ENCODE measurements at regions of chr12 and their contacts with region 1.

Region 1: DNA sequence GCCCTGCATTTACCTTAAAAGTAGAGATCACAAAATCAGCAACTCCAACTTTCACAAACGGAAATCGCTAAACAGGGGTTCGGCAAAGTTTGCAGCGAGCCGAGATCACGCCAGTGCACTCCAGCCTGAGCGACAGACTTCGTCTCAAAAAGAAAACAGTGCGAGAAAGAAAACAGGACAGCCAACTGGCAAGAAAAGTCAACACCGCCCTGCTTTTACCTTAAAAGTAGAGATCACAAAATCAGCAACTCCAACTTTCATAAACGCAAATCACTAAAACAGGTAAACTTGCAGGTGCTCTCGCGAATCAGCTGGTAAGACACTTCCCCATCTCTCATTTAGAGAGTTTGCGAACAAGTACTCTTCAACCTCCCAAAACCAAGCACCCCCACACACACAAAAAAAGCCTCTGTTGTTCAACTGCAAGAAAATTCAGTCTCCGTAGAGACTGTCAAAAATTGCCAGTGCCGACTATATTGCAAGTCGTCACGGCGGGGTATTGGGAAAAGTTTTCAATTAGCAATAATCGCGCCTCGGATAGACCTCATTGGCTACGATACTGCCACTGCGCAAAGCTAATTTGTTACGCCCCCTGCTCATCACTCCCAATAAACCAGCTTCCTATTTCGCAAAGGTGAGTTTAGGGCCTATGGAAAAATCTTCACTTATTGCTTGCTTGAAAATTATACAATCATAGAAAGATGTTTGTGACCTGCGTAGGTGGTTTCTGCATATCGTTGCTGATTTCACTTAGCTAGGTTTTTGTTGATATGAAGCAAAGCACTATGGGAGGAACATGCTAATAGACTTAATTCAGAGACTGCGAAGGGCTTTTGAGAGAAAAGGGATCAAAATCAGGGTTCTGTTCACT is at the start of gene RNU4-1:
- H3K4me3 Mint-ChIP-seq: no peak within 1 kb of the TSS
- H3K27ac Mint-ChIP-seq: no peak within 1 kb of the TSS
- H3K4me1 Mint-ChIP-seq: no peaks in the 10 kb centered on the region
- H3K27me3 Mint-ChIP-seq: peaks cover 2% of the 10 kb centered on the region

Region 2: GRCh38 chr12:119902084-119902509 is 390.8 kb before region 1 on chr12:
- intact Hi-C with region 1: no loop called
- H3K4me3 Mint-ChIP-seq: no peak overlapping the region
- H3K27ac Mint-ChIP-seq: no peak overlapping the region
- H3K4me1 Mint-ChIP-seq: no peaks in the 10 kb centered on the region
- H3K27me3 Mint-ChIP-seq: peaks cover 5% of the 10 kb centered on the region

Region 3: DNA sequence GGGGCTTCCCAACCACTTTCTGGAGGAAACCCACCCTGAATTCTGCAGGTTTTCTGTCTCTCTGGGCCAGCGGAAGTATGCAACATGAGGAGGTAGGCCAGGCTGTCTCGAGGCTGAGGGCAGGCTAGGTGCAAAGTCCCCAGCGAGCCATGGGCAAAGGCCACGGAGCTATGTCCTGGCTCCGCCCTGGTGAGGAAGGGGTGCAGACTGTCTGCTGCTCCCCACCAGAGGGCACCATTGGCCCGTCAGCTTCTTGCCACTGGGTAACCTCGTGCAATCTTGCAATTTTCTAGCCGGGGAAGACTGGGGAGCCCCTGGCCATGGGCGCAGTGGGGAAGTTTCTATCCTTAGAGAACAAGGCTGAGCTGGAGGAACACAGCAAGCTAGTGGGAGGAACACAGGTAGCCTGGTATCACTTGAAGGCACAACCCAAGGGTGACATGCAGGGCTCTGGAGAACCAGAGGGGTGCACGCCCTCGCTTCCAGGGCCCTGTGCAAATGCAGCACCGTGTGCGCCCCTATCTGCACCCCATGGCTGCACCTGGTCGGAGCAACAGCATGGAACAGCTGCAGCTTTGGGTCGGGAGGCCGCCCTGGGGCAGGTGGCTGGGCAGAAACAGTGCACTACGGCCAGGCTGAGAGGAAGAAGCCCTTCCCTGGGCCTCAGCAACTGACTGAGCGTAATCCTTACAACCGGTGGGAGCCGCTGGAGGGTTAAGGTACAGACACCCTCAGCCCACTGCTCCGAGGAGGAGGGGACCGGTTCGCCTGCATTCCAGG is 64.4 kb before region 1 on chr12:
- intact Hi-C with region 1: loop called (anchors 1 kb)
- H3K4me3 Mint-ChIP-seq: peak overlapping the region; percentile 34
- H3K27ac Mint-ChIP-seq: peak overlapping the region; percentile 84
- H3K4me1 Mint-ChIP-seq: peaks cover 100% of the 10 kb centered on the region
- H3K27me3 Mint-ChIP-seq: no peaks in the 10 kb centered on the region

Measured in dendritic cell treated with granulocyte-macrophage colony-stimulating factor and Interleukin-4, amounts not matched to agents 40 ng/mL and 50 ng/mL, for 4 days (primary cell).